Gastrocnemius medialis (tissue), 4 donors: ENCODE measurements at regions of chr16 and their contacts with region 1.

Region 1: DNA sequence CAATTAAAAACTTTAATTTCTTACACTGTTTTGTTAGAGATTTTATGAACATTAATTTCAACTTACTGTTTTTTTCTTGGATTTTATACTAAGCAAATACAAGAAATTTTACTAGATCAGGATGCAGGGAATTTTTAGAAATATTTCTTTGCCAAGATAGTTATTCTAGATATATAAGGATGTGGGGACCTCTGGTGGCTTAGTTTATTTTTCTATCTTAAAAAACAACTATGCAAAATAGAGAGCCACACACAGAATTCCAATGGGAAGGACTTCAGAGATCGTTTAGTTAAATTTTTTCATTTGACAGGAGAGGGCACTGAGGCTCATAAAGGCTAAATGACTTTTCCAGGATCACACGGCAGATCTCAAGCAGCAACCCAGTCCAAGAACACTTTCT is 23.0 kb upstream of the CAPNS2 start:
- DNase-seq: no peak
- ATAC-seq: no peak
- H3K4me3 ChIP-seq: no peak overlapping the region
- H3K27ac ChIP-seq: no peak overlapping the region
- H3K4me1 ChIP-seq: peaks cover 0 to 4% of the 10 kb centered on the region in 2 donors
- H3K27me3 ChIP-seq: no peaks in the 10 kb centered on the region
- CTCF ChIP-seq: peak in 4 of 5 experiments; percentile 19 to 39 (median 35)
- POLR2A ChIP-seq: no peak

Region 2: GRCh38 chr16:55494994-55495421 is 48.5 kb before region 1 on chr16:
- in situ Hi-C with region 1: no loop called
- intact Hi-C with region 1: loop called (anchors 5 kb)
- DNase-seq: no peak
- ATAC-seq: peak; percentile 40 to 61
- H3K4me3 ChIP-seq: no peak overlapping the region
- H3K27ac ChIP-seq: no peak overlapping the region
- H3K4me1 ChIP-seq: peaks cover 0 to 9% of the 10 kb centered on the region in 2 donors
- H3K27me3 ChIP-seq: no peaks in the 10 kb centered on the region
- CTCF ChIP-seq: peak in 2 of 5 experiments; percentile 20 to 26
- POLR2A ChIP-seq: no peak

Region 3: DNA sequence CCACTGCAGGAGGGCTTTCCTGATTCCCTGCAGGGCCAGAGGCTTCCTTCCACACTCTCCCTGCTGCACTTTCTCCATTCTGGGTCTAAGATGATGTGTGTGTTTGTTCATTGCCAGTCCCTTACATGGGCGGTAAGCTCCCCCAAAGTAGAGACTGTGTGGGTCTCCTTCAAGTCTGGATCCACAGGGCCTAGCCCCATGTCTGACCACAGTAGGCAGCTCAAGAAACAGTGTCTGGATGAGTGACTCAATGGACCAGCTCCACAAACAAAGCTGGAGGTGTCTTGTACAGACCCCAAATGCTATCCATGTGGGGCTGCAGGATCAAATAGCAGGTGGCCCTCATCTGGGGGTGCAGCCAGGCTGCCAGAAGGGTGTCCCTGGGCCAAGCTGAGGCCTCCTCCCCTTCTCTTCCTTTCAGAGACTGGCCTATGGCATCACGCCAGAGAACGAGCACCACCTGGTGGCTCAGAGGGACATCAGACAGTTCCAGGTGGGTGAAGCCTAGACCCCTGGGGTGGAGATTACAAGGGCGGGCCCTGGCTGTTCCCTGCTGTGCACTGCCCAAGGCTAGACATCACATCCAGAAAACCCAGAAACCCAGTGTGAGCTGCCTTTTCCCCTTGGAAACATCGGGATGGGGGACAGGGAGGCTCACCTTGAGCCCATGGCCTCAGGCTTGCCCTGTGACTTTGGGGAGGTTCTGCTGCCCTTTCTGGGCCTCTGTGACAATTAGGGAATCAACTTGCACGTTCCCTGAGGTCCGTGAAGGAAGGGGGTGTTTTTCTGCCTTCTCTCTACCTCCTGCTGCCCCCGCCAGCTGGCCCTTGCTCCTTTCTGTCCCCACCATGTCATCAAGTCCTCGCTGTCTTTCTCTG is 158.2 kb after region 1 on chr16:
- in situ Hi-C with region 1: loop called in 1 of 4 experiments (anchors 10 kb)
- intact Hi-C with region 1: no loop called
- DNase-seq: peak; percentile 7 to 35
- ATAC-seq: peak; percentile 58 to 70
- H3K4me3 ChIP-seq: no peak overlapping the region
- H3K27ac ChIP-seq: no peak overlapping the region
- H3K4me1 ChIP-seq: no peaks in the 10 kb centered on the region
- H3K27me3 ChIP-seq: no peaks in the 10 kb centered on the region
- CTCF ChIP-seq: peak; percentile 57 to 76 (median 68)
- POLR2A ChIP-seq: no peak